Motor neuron (in vitro differentiated cells): ENCODE measurements at regions of chr19 and their contacts with region 1.

Region 1: DNA sequence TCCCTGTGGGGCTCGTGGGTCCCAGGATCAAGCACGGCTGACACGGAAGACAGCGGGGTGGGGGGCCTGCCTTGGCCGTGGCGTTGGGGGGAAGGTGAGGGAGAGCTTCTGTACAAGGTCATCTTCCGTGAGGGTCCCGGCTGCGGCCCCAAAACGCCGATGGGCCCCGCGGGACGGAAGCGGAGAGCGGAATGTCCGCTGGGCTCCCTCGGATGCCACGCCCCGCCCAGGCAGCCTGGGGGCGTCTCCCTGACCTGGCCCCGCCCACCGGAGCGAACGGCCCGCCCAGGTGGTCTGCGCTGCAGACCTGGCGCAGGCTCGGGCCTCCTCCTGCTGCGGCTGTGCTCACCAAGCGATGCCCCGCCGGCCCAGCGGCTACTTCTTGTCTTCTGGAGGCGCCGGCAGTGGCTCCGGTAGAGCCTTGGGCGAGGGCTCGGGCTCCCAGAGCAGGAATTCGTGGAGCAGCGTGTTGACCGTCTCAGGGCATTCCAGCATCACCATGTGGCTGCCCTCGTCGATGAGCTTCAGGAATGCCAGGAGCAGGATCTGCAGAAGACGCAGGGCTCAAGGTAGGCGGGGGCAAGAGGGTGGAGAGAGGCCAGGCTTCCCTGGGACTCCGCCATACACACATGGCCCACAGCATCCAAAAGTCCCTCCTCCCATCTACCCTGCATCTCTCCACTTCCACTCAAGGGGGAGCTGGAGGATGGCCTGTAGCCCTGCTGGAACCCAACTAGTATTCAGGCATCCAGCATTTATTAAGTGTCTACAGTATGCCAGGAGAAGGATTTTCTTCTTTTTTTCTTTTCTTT is 10.7 kb downstream of the ABHD8 start:
- ATAC-seq: peak; percentile 88 to 97 (median 92)
- H3K4me3 ChIP-seq: peak overlapping the region; percentile 10 to 36 (median 35)
- H3K27ac ChIP-seq: peak overlapping the region; percentile 35 to 50
- H3K4me1 ChIP-seq: peaks cover 0 to 3% of the 10 kb centered on the region in 2 donors

Region 2: DNA sequence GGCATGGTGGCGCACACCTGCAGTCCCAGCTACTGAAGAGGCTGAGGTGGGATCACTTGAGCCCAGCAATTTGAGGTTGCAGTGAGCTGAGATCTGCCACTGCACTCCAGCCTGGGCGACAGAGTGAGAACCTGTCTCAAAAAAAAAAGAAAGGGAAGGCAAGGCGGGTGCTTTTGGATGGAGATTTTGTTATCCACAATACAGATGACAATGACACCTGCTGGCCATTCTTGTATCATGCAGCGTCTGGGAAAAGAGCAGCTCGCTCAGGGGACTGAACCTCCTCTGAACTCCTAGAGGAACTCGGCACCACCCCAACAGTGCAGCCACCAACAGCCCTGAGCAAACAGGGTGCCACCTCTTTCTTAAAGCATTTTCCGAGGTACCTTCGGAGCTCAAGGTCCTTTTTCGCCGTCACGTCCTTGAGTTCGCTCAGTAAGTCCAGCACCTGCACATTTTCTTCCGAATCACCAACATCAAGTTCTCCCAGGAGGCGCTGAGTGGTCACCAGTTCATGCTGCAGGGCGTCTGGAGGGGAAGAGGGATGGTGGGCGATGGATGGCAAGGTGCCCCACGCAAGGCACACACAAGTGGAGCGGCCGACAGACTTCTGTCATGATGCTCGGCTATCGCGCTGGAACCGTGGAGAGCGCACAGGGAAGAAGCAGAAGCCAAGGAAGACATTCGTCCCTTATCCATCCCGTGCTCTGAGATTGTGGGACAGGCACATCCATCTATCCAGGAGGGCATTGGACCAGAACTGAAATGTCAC is 239.9 kb before region 1 on chr19:
- in situ Hi-C with region 1: loop called in 5 of 9 experiments (anchors 25 kb)
- ATAC-seq: peak in 5 of 8 experiments; percentile 19 to 60 (median 53)
- H3K4me3 ChIP-seq: no peak overlapping the region
- H3K27ac ChIP-seq: peak overlapping the region in 1 of 2 donors; percentile 17
- H3K4me1 ChIP-seq: peaks cover 0 to 6% of the 10 kb centered on the region in 2 donors